MCF 10A (cell line): ENCODE measurements at regions of chr11 and their contacts with region 1.

Region 1: DNA sequence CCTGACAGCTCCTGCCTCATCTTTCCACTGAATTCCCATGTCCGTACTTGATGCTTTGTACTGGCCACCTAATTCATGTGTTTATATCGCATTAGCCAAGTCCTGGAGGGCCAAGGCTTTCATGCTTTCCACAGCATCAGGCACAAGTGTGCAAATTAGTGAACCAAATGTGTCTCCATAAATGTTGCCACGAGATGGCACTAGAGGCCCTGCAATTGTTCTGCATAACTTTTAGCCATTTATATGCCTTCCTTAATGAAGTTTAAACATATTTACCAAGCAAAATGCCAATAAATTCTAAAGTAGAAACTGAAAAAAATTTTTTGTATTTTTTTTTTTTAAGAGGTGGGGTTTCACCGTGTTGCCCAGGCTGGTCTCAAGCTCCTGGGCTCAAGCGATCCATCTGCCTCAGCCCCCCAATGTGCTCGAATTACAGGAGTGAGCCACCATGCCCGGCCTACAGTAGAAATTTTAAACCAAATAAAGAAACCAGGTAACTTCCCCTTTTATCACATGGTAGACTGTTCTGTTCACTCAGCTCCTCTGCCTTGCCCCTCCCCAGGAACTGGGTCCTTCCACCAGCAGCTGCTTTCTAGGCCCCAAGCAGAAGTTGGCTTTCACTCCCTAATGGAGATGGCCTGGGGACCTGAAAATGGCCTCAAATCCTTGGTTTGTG is 20.8 kb upstream of the IL18BP start:
- DNase-seq: peak; percentile 66
- H3K4me3 Mint-ChIP-seq: no peak overlapping the region
- H3K27ac Mint-ChIP-seq: no peak overlapping the region
- H3K4me1 Mint-ChIP-seq: no peaks in the 10 kb centered on the region
- H3K27me3 Mint-ChIP-seq: no peaks in the 10 kb centered on the region
- CTCF ChIP-seq: peak; percentile 67

Region 2: GRCh38 chr11:71988050-71988449 is 10.2 kb after region 1 on chr11:
- CTCF ChIA-PET with region 1: interaction called, 51 read pairs
- POLR2A ChIA-PET with region 1: interaction called, 4 read pairs
- intact Hi-C with region 1: no loop called
- DNase-seq: no peak
- H3K4me3 Mint-ChIP-seq: no peak overlapping the region
- H3K27ac Mint-ChIP-seq: no peak overlapping the region
- H3K4me1 Mint-ChIP-seq: no peaks in the 10 kb centered on the region
- H3K27me3 Mint-ChIP-seq: no peaks in the 10 kb centered on the region
- CTCF ChIP-seq: no peak

Region 3: GRCh38 chr11:72024069-72024754 is 46.3 kb after region 1 on chr11:
- CTCF ChIA-PET with region 1: interaction called, 17 read pairs
- POLR2A ChIA-PET with region 1: no interaction called
- intact Hi-C with region 1: no loop called
- DNase-seq: no peak
- H3K4me3 Mint-ChIP-seq: no peak overlapping the region
- H3K27ac Mint-ChIP-seq: peak overlapping the region; percentile 19
- H3K4me1 Mint-ChIP-seq: peaks cover 4% of the 10 kb centered on the region
- H3K27me3 Mint-ChIP-seq: no peaks in the 10 kb centered on the region
- CTCF ChIP-seq: no peak

Region 4: DNA sequence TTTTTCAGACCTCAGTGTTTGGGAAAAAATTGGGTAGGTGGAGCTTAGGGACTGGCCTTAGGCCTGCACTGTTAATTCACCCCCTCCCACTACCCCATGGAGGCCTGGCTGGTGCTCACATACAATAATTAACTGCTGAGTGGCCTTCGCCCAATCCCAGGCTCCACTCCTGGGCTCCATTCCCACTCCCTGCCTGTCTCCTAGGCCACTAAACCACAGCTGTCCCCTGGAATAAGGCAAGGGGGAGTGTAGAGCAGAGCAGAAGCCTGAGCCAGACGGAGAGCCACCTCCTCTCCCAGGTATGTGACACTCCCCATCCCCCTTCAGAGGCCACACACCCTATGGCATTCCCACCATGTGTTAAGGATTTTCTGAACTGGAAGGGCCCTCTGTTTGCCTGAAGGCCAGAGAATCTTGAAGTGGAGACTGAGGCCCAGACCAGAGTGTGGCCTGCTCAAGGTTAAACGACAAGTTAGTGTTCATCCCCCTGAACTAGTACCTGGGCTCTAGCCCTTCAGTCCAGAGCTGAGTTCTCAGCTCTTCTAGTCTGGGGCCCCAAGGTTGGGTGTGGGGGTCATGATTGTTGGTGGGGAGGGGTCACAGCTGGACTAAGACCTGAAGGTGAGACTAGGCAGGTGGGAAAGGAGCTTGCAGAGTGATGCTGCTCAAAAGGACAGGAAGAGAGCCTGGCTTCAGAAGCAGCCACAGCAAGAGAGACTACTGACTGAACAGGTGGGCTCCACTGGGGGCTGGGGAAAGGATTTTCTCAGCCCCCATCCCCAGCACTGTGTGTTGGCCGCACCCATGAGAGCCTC is 211.8 kb after region 1 on chr11:
- CTCF ChIA-PET with region 1: interaction called, 38 read pairs
- POLR2A ChIA-PET with region 1: no interaction called
- intact Hi-C with region 1: no loop called
- DNase-seq: no peak
- H3K4me3 Mint-ChIP-seq: no peak overlapping the region
- H3K27ac Mint-ChIP-seq: no peak overlapping the region
- H3K4me1 Mint-ChIP-seq: peaks cover 7% of the 10 kb centered on the region
- H3K27me3 Mint-ChIP-seq: no peaks in the 10 kb centered on the region
- CTCF ChIP-seq: no peak

Region 5: GRCh38 chr11:72430741-72431570 is 453.1 kb after region 1 on chr11:
- CTCF ChIA-PET with region 1: interaction called, 57 read pairs
- POLR2A ChIA-PET with region 1: interaction called, 3 read pairs
- intact Hi-C with region 1: loop called (anchors 1 kb)
- DNase-seq: peak; percentile 51
- H3K4me3 Mint-ChIP-seq: no peak overlapping the region
- H3K27ac Mint-ChIP-seq: no peak overlapping the region
- H3K4me1 Mint-ChIP-seq: peaks cover 28% of the 10 kb centered on the region
- H3K27me3 Mint-ChIP-seq: no peaks in the 10 kb centered on the region
- CTCF ChIP-seq: peak; percentile 81